ENCODE measurements at regions of chr3 and their contacts with region 1.

Region 1: DNA sequence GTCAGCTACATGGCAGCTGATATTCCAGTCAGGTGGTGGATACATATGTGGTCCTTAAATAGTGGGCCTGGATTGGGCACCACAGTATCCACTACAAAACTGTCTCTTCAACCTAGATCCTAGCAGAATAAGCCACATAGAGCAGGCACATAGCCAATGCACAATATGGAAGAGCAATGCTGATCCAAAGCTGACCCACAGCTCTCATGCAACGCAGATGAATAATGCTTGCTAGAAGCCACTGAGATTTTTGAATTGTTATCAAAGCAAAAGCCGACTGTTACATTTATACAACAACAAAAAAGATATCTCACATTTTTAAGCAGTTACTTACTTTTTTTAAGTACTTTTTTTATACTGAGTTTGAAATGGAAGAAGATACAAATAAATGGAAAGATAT is 11.2 kb downstream of the CNTN3 start:
- DNase-seq: no peak
- H3K4me3 Mint-ChIP-seq: no peak overlapping the region
- H3K27ac Mint-ChIP-seq: no peak overlapping the region
- H3K4me1 Mint-ChIP-seq: no peaks in the 10 kb centered on the region
- H3K27me3 Mint-ChIP-seq: no peaks in the 10 kb centered on the region
- CTCF ChIP-seq: no peak

Region 2: DNA sequence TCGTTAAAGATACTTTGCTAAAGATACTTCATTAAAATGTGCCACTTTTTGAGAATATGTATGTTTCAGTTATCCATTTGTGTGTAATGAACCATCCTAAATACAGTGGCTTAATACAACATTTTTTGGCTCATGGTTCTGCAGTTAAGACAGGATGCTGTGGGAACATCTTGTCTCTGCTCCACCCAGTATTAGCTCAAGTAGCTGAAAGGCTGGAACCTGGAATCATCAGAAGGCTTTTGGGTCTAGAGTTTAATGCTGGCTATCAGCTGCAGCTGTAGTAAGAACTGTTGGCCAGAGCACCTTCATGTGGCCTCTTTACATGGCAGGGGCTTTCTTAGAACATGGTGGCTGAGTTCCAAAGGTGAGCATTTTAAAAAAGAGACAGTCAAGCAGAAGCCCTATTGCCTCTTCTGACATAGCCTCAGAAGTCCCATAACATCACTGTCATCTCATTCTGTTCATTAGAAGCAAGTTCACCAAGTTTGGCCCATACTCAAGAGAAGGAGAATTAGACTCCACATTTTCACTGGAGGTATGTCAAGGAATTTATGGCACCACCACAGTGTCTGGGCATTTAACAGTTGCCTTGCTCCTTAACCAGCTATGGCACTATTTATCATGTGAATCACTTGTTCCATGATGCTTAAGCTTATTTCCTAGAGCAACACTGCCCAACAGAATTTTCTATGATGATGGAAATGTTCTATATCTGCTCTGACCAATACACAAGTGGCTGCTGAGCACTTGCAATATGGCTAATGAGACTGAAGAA is 908.1 kb before region 1 on chr3:
- CTCF ChIA-PET with region 1: no interaction called
- intact Hi-C with region 1: loop called (anchors 5 kb)
- DNase-seq: no peak
- H3K4me3 Mint-ChIP-seq: no peak overlapping the region
- H3K27ac Mint-ChIP-seq: no peak overlapping the region
- H3K4me1 Mint-ChIP-seq: no peaks in the 10 kb centered on the region
- H3K27me3 Mint-ChIP-seq: no peaks in the 10 kb centered on the region
- CTCF ChIP-seq: no peak

Region 3: GRCh38 chr3:74054566-74054965 is 548.7 kb before region 1 on chr3:
- CTCF ChIA-PET with region 1: no interaction called
- intact Hi-C with region 1: no loop called
- DNase-seq: no peak
- H3K4me3 Mint-ChIP-seq: no peak overlapping the region
- H3K27ac Mint-ChIP-seq: no peak overlapping the region
- H3K4me1 Mint-ChIP-seq: no peaks in the 10 kb centered on the region
- H3K27me3 Mint-ChIP-seq: no peaks in the 10 kb centered on the region
- CTCF ChIP-seq: no peak

Region 4: DNA sequence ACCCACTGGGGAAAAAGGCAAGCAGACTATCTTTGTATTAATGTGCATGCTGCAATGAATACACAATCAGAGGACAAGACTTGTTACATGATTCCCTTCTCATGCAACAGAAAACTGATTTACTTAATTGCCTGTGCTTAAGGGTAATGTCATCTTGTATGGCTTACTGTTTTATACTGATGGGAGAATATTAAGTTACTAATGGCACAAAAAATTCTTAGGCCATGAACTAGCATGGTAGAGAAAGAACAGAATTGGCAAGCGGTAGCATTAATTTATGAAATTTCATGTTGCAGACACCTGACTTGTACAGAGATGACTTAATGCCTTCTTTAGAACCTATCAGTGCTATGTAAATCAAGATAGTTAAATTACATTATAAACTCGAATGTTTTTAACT is 271.1 kb before region 1 on chr3:
- CTCF ChIA-PET with region 1: no interaction called
- intact Hi-C with region 1: no loop called
- DNase-seq: no peak
- H3K4me3 Mint-ChIP-seq: no peak overlapping the region
- H3K27ac Mint-ChIP-seq: no peak overlapping the region
- H3K4me1 Mint-ChIP-seq: no peaks in the 10 kb centered on the region
- H3K27me3 Mint-ChIP-seq: no peaks in the 10 kb centered on the region
- CTCF ChIP-seq: no peak

Measured in Calu3 (cell line).